AG04449 (cell line): ENCODE measurements at regions of chr18 and their contacts with region 1.

Region 1: DNA sequence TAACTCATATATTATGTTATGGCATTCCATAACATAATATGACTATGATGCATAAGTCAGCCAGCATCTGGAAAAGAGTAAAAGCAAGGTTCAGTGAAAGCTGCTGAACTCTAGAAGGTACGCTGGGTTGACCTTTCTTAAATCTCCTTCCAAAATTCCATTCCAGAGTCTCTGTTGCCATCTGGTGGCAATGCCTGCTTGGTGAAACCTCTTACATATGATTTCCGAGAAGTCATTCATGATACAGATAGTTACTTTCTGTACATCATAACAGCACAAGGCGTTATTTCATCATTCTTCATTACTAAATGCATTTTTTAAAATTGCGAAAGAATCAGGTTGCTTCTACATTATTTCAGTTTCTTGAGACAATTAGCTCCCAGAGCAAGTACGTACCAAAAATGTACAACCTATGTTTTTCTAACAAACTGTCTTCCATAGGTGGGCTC is 7.0 kb upstream of the EPG5 start:
- DNase-seq: peak; percentile 63
- H3K4me3 ChIP-seq: no peak overlapping the region
- CTCF ChIP-seq: peak; percentile 73

Region 2: DNA sequence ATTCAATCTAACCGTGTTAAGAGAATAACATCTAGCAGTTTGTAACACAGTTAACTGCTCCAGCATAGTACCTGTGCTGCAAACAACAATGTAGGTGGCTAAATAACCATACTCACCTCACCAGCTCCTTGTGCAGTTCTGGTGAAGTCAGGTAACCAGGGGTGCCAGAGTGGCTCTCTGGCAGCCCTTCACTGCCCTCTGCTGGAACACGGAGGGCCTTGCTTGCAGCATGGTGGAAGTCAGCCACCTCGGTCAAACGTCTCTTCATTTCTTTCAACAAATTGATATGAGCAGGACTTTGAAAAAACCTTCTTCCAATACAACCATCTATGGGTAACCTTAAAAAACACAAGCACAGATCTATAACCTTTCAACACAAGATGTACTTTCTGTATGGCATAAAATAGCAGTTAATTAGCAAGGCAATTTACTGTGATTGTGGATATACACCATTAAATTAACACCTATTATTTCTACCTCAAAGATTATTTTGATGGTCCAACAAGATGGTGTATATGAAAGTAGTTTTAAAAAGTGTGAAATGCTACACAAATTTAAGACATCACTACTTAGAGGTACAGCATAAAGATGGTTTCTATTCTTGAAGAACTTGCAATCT is 63.6 kb before region 1 on chr18:
- CTCF ChIA-PET with region 1: interaction called, 17 read pairs
- POLR2A ChIA-PET with region 1: no interaction called
- DNase-seq: no peak
- H3K4me3 ChIP-seq: no peak overlapping the region
- CTCF ChIP-seq: peak; percentile 82

Region 3: DNA sequence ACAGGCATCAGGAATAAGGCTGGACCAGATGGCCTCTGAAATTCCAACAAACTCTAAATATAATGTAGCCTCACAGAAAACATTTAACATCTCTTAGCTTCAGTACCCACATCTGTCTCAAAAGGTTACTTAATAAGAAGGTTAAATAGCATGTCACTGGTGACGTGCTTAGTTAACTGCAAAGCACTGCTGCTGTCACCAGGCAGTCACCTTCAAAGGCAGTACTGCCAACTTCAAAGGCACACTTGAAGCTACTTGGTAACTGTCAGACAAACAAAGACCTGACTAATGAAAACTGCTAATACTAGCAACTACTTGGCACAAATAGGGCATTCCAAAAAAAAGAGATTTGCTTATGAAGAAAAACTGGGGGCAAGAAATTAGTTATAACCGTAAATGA is 43.1 kb before region 1 on chr18:
- CTCF ChIA-PET with region 1: interaction called, 13 read pairs
- POLR2A ChIA-PET with region 1: no interaction called
- DNase-seq: no peak
- H3K4me3 ChIP-seq: no peak overlapping the region
- CTCF ChIP-seq: no peak

Region 4: DNA sequence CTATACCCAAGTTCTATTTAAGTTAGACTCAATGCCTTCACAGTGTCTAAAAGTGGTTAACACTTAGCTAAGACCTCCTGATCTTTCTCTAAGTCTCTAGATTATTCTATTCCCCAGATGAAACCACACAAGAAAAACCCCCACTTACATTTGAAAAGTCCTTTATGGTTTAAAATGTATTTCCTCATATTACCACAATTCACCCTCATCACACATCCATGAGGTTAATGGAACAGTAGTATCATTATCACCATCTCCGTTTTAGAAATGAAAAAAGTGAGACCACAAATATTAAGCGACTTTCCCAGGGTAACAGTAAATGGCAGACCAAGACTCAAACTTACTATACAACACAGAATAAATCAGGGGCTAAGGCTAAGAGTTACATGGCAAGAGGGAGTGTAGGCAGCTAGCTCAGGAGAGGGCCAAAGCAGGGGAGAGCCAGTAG is 35.6 kb before region 1 on chr18:
- CTCF ChIA-PET with region 1: interaction called, 10 read pairs
- POLR2A ChIA-PET with region 1: no interaction called
- DNase-seq: no peak
- H3K4me3 ChIP-seq: no peak overlapping the region
- CTCF ChIP-seq: no peak

Region 5: GRCh38 chr18:46343931-46344372 is 369.8 kb after region 1 on chr18:
- CTCF ChIA-PET with region 1: no interaction called
- POLR2A ChIA-PET with region 1: no interaction called
- DNase-seq: no peak
- H3K4me3 ChIP-seq: no peak overlapping the region
- CTCF ChIP-seq: no peak